ENCODE measurements at regions of chr20 and their contacts with region 1.

Region 1: DNA sequence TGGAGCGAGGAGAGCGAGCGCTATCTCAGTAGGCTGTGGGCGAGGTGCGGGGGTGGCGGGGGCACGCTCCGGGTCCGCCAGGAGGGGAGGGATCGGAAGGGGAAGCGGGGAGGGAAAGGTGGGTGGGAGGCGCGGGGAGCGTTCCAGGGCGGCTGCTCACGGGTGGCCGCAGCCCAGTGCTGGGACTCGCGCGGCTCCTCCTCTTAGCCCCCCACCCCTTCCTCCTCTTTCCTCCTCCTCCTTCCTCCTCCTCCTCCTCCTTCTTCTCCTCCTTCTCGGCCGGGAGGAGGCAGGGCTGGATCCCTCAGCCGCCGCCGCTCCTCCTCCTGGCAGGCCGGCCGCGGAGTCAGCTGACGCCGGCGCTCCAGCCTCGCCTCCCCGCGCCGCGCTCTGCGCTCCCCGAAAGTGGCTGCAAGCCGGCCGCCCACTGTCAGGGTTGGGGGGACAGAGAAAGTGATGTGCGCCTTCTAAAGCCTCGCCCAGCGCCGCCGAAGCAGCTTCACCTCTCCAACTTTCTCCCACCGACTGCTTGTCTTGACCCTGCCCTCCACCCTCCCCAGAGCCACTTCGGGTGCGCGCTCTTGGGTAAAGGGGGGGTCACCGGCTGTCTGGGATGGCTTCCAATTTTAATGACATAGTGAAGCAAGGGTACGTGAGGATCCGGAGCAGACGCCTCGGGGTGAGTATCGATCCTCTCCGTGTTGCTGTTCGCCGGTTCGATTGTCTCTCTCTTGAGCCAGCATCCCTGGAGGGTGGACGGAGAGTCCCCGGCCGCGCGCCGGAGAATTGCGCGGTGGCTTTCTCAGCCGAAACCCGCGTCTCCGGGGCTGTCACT is at the start of gene DOK5:
- ATAC-seq: peak; percentile 65 to 86 (median 80)
- H3K4me3 ChIP-seq: peak within 1 kb of the TSS; percentile 41 to 83 (median 65)
- H3K27ac ChIP-seq: no peak within 1 kb of the TSS
- H3K4me1 ChIP-seq: peaks cover 7 to 15% of the 10 kb centered on the region in 2 donors
- total RNA-seq, gene DOK5: 0.31 to 92.8 (median 32.9) TPM

Region 2: DNA sequence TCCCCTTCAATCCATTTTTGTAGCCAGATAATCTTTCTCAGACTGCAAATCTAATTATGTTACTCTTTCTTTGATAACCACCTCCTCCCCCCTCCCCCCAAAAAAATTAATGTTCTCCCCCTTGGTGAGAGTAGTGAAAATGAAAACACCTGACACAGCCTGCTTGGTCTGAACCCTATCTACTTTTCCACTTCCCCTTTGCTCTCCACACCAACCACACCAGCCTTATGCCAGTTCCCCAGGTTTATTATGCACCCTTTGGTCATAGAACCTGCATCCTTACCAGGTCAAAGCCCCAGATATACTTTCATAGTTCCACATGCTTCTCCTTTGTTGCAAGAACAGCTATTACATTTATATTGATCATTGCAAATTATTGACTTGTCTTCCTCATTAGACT is 248.3 kb before region 1 on chr20:
- in situ Hi-C with region 1: loop called in 1 of 9 experiments (anchors 25 kb)
- ATAC-seq: no peak
- H3K4me3 ChIP-seq: no peak overlapping the region
- H3K27ac ChIP-seq: no peak overlapping the region
- H3K4me1 ChIP-seq: no peaks in the 10 kb centered on the region

Measured in motor neuron (in vitro differentiated cells).